Head of caudate nucleus (tissue), 42 donors: ENCODE measurements at regions of chr15 and their contacts with region 1.

Region 1: DNA sequence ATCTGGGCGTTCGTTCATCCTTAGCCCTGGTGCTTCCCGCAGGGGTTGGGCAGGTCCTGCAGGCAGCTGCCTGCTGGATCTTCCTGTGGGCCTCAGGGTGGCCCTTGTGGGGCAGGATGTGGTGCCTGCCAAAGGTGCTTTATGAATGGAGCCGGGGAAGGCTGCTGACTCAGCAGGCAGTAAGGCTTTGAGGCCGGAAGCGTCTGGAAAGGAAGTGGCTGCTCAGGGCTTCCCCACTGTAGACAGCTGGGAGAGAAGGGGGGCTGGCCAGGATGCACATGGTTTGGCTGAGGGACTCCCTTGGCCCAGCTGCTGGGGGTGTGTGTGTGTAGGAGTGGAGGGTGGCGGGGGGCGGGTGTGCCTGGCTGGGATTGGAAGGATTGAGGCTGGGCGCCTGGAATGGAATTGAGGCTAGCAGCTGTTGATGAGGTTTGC is 12.9 kb downstream of the CD276 start:
- DNase-seq: peak; percentile 39 to 86 (median 67)

Region 2: GRCh38 chr15:73560501-73561117 is 136.4 kb before region 1 on chr15:
- intact Hi-C with region 1: loop called (anchors 5 kb)
- DNase-seq: peak in 12 of 42 donors; percentile 22 to 66 (median 43)

Region 3: GRCh38 chr15:73633111-73633990 is 63.7 kb before region 1 on chr15 and contains the start of gene NPTN:
- intact Hi-C with region 1: loop called (anchors 10 kb)
- DNase-seq: peak; percentile 97 to 100 (median 99)